CD8-positive, alpha-beta T cell (primary cell): ENCODE measurements at regions of chr14 and their contacts with region 1.

Region 1: GRCh38 chr14:92121670-92122350 is at the starts of genes CPSF2 and NDUFB1:
- DNase-seq: peak; percentile 70 to 90 (median 83)
- ATAC-seq: peak; percentile 85
- H3K4me3 ChIP-seq: peak within 1 kb of the TSS; percentile 81 to 86
- H3K4me3 Mint-ChIP-seq: peak within 1 kb of the TSS; percentile 99
- H3K27ac ChIP-seq: peak within 1 kb of the TSS; percentile 88 to 89
- H3K27ac Mint-ChIP-seq: peak within 1 kb of the TSS; percentile 99
- H3K4me1 ChIP-seq: peaks cover 31% of the 10 kb centered on the region
- H3K4me1 Mint-ChIP-seq: peaks cover 55% of the 10 kb centered on the region
- H3K27me3 ChIP-seq: no peaks in the 10 kb centered on the region
- H3K27me3 Mint-ChIP-seq: no peaks in the 10 kb centered on the region
- CTCF ChIP-seq: no peak
- total RNA-seq, gene CPSF2: 12.1 to 14.2 TPM
- total RNA-seq, gene NDUFB1: 38.5 to 43.9 TPM

Region 2: GRCh38 chr14:92039719-92040430 is 81.9 kb before region 1 on chr14 and contains the start of gene TRIP11:
- CTCF ChIA-PET with region 1: no interaction called
- POLR2A ChIA-PET with region 1: interaction called, 26 read pairs
- intact Hi-C with region 1: loop called (anchors 1 kb)
- DNase-seq: peak; percentile 93 to 97 (median 95)
- ATAC-seq: peak; percentile 86
- H3K4me3 ChIP-seq: peak within 1 kb of the TSS; percentile 86 to 93
- H3K4me3 Mint-ChIP-seq: peak within 1 kb of the TSS; percentile 95
- H3K27ac ChIP-seq: peak within 1 kb of the TSS; percentile 94 to 96
- H3K27ac Mint-ChIP-seq: peak within 1 kb of the TSS; percentile 100
- H3K4me1 ChIP-seq: peaks cover 34% of the 10 kb centered on the region
- H3K4me1 Mint-ChIP-seq: peaks cover 51% of the 10 kb centered on the region
- H3K27me3 ChIP-seq: no peaks in the 10 kb centered on the region
- H3K27me3 Mint-ChIP-seq: no peaks in the 10 kb centered on the region
- CTCF ChIP-seq: no peak
- total RNA-seq, gene TRIP11: 25.3 to 26.5 TPM

Region 3: DNA sequence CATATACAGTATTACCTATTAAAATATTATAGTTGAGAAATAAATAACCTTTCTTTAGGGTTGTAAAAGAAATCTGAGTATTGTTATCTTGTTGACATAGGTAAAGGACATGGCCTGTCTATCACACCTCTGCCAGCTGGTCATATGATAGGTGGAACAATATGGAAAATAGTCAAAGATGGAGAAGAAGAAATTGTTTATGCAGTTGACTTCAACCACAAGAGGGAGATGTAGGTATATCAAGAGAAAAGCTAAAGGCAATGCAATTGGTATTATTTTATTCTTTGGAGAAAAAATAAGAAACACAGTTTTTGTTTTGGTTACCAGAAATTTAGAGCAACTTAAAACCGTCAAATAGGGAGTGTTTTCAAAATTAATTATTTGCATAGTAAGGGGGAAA is 13.5 kb after region 1 on chr14:
- CTCF ChIA-PET with region 1: interaction called, 11 read pairs
- POLR2A ChIA-PET with region 1: interaction called, 9 read pairs
- intact Hi-C with region 1: no loop called
- DNase-seq: peak in 2 of 9 experiments; percentile 31 to 53
- ATAC-seq: no peak
- H3K4me3 ChIP-seq: no peak overlapping the region
- H3K4me3 Mint-ChIP-seq: no peak overlapping the region
- H3K27ac ChIP-seq: no peak overlapping the region
- H3K27ac Mint-ChIP-seq: no peak overlapping the region
- H3K4me1 ChIP-seq: no peaks in the 10 kb centered on the region
- H3K4me1 Mint-ChIP-seq: peaks cover 2% of the 10 kb centered on the region
- H3K27me3 ChIP-seq: no peaks in the 10 kb centered on the region
- H3K27me3 Mint-ChIP-seq: no peaks in the 10 kb centered on the region
- CTCF ChIP-seq: peak; percentile 37

Region 4: DNA sequence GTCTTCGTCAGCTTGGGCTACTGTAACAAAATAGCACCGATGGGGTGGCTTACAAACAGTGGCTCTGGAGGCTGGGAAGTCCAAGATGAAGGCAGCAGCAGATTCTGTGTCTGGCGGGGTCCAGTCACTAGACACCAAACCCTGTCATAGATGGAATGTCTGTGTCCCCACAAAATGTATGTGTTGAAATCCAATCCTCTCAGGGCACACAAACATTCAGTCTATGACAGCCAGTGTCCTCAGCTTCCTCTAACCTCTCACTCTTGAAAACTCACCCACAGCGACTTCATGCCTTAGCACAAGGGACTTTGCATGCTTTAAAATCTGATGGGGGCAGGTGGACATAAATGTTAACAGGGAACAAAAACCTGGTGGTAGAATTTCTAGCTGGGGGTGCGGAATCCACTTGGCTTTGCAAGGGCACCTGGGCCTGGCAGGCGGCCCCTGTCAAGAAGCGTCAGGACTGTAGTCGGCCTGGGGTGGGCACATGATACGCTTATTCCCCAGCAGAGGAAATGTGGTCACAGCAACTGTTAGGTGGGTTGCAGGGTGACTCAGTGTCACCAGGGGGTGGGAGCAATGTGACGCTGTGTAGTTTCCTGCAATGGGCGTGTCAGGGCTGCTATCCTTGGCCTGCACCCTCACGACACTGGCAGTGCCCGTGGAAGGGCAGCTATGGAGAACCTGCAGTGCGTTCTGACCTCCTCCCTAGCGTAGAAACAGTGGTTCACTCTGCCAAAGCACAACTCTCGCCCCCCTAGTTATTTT is 409.5 kb after region 1 on chr14:
- CTCF ChIA-PET with region 1: no interaction called
- POLR2A ChIA-PET with region 1: no interaction called
- intact Hi-C with region 1: loop called in 1 of 2 experiments (anchors 5 kb)
- DNase-seq: peak; percentile 65 to 98 (median 84)
- ATAC-seq: peak; percentile 85
- H3K4me3 ChIP-seq: peak overlapping the region in 1 of 2 experiments; percentile 15
- H3K4me3 Mint-ChIP-seq: peak overlapping the region; percentile 67
- H3K27ac ChIP-seq: peak overlapping the region; percentile 55 to 97
- H3K27ac Mint-ChIP-seq: peak overlapping the region; percentile 99
- H3K4me1 ChIP-seq: peaks cover 65% of the 10 kb centered on the region
- H3K4me1 Mint-ChIP-seq: peaks cover 75% of the 10 kb centered on the region
- H3K27me3 ChIP-seq: no peaks in the 10 kb centered on the region
- H3K27me3 Mint-ChIP-seq: no peaks in the 10 kb centered on the region
- CTCF ChIP-seq: no peak

Region 5: GRCh38 chr14:92793709-92794546 is 672.1 kb after region 1 on chr14 and contains the start of gene GOLGA5:
- CTCF ChIA-PET with region 1: no interaction called
- POLR2A ChIA-PET with region 1: no interaction called
- intact Hi-C with region 1: loop called (anchors 1 to 5 kb)
- DNase-seq: peak; percentile 97 to 99 (median 98)
- ATAC-seq: peak; percentile 94
- H3K4me3 ChIP-seq: peak within 1 kb of the TSS; percentile 92 to 99
- H3K4me3 Mint-ChIP-seq: peak within 1 kb of the TSS; percentile 97
- H3K27ac ChIP-seq: peak within 1 kb of the TSS; percentile 88 to 92
- H3K27ac Mint-ChIP-seq: peak within 1 kb of the TSS; percentile 97
- H3K4me1 ChIP-seq: peaks cover 27% of the 10 kb centered on the region
- H3K4me1 Mint-ChIP-seq: peaks cover 38% of the 10 kb centered on the region
- H3K27me3 ChIP-seq: no peaks in the 10 kb centered on the region
- H3K27me3 Mint-ChIP-seq: no peaks in the 10 kb centered on the region
- CTCF ChIP-seq: no peak
- total RNA-seq, gene GOLGA5: 4.5 to 5.9 TPM